WTC11 (cell line): ENCODE measurements at regions of chr1 and their contacts with region 1.

Region 1: DNA sequence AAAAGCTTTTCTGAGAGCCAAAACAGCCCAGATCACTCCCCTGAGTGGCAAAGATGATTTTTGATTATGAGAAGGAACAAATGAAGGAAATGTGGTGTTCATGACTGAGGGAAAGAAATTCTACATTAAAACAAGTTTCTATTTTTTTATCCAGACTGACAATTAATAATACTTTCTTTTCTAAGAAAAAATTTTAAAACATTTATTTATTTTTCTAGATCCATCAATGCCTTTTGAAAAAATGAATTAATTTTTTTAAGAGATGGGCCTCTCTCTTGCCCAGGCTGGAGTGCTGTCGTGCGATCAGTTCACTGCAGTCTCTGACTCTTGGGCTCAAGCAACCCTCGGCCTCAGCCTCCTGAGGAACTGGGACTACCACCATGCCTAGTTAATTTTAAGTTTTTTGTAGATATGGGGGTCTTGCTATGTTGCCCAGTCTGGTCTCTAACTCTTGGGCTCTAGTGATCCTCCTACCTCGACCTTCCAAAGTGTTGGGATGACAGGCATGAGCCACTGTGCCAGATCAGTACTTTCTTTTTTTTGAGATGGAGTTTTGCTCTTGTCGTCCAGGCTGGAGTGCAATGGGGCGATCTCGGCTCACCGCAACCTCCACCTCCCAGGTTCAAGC is 11.2 kb upstream of the TXNIP start:
- DNase-seq: no peak
- ATAC-seq: no peak
- H3K4me3 Mint-ChIP-seq: no peak overlapping the region
- H3K27ac Mint-ChIP-seq: no peak overlapping the region
- H3K4me1 Mint-ChIP-seq: no peaks in the 10 kb centered on the region
- H3K27me3 Mint-ChIP-seq: no peaks in the 10 kb centered on the region
- CTCF ChIP-seq: no peak; the same call in 1 of the 2 replicates

Region 2: DNA sequence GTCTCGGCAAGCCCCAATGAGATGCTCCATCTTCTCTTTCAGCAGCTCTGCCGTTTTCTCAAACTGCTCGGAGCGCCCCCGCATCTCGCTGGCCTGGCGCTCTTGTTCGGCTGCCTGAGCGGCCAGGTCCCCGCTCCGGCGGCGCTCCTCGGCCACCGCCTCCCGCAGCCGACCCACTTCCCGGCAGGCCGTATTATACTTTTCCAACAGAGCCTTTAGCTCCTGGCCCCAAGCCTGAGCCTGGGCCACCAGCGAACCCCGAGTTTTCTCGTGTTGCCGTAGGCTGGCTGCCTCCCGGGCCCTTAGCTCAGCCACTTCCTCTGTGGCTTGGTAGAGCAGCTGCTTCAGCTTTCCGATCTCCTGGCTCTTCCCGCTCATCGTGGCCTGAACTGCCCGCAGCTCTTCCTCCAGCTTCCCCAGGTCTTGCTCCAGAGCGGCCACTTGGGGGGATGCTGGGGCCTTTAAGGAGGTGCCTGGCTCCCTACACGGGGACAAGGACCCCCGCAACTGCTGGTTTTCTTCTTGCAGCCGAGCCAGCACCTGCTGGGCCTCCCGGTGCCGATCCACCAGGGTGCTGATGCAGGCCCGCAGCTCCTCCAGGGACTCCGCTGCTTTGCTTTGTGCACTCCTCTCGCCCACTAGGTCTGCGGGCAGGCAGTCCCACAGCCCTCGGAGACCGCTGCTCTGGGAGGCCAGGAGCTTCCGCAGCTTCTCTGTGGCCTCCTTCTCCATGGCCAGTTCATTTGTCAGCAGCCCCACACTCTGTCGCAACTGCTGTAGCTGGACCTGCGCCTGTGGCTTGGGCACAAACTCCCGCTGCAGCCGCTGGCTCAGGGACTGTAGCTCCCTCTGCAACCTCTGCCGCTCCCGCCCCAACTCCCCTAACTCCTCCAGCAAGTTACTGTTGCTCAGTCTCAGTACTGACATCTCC is 135.4 kb before region 1 on chr1:
- CTCF ChIA-PET with region 1: interaction called, 13 read pairs
- POLR2A ChIA-PET with region 1: no interaction called
- DNase-seq: peak; percentile 57
- ATAC-seq: peak; percentile 76
- H3K4me3 Mint-ChIP-seq: peak overlapping the region; percentile 69
- H3K27ac Mint-ChIP-seq: no peak overlapping the region; the same call in 1 of the 2 replicates
- H3K4me1 Mint-ChIP-seq: peaks cover 37% of the 10 kb centered on the region
- H3K27me3 Mint-ChIP-seq: peaks cover 39% of the 10 kb centered on the region
- CTCF ChIP-seq: no peak

Region 3: GRCh38 chr1:145957443-145958319 is 49.9 kb before region 1 on chr1 and contains the start of gene LIX1L:
- CTCF ChIA-PET with region 1: interaction called, 16 read pairs
- POLR2A ChIA-PET with region 1: no interaction called
- DNase-seq: peak; percentile 96
- ATAC-seq: peak; percentile 86
- H3K4me3 Mint-ChIP-seq: peak within 1 kb of the TSS; percentile 70
- H3K27ac Mint-ChIP-seq: peak within 1 kb of the TSS; percentile 14; the same call in 1 of the 2 replicates
- H3K4me1 Mint-ChIP-seq: peaks cover 31% of the 10 kb centered on the region
- H3K27me3 Mint-ChIP-seq: peaks cover 92% of the 10 kb centered on the region
- CTCF ChIP-seq: no peak
- total RNA-seq, gene LIX1L: 3.0 to 3.8 TPM (median 3.8 TPM) in 3 replicates

Region 4: GRCh38 chr1:145963995-145964901 is 43.4 kb before region 1 on chr1 and contains the starts of genes ANKRD34A and POLR3GL:
- CTCF ChIA-PET with region 1: interaction called, 10 read pairs
- POLR2A ChIA-PET with region 1: no interaction called
- DNase-seq: peak; percentile 96
- ATAC-seq: peak; percentile 85
- H3K4me3 Mint-ChIP-seq: peak within 1 kb of the TSS; percentile 91
- H3K27ac Mint-ChIP-seq: peak within 1 kb of the TSS; percentile 68; the same call in 1 of the 2 replicates
- H3K4me1 Mint-ChIP-seq: peaks cover 38% of the 10 kb centered on the region
- H3K27me3 Mint-ChIP-seq: peaks cover 70% of the 10 kb centered on the region
- CTCF ChIP-seq: no peak
- total RNA-seq, gene ANKRD34A: 0.21 to 0.44 TPM (median 0.22 TPM) in 3 replicates
- total RNA-seq, gene POLR3GL: 3.8 to 8.3 TPM (median 6.7 TPM) in 3 replicates

Region 5: DNA sequence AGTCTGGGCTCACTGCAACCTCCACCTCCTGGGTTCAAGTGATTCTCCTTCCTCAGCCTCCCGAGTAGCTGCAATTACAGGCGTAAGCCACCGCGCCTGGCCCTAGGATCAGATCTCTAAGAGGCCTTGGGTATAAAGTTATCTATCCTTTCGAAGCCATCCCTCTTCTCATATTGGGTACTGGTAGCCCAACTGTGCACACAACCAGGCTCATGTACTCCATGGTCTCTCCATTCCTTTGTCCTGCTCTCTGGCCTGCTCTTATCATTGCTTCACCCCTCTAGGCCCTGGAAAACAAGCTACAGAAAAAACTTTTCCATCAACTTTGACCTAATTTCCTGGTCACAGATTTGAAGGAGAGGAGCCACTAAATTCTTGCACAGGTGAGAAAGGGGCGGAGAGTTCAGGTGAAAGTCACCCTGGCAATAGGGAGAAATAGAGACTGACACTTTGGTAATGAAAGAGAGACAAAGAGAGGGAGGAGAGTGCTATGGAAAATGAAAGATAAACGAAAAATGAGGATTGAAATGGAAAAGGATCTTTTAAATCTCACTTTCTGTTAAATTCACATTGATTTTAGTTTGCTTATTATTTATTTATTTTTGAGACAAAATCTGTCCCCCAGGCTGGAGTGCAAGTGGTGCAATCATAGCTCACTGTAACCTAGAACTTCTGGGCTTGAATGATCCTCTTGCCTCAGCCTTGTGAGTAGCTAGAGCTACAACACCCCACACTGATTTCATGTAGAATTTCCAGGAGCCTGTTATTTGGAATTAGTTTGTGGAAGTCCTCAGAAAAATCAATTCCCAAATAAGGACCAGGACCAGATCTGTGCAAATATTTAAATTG is 17.1 kb before region 1 on chr1:
- CTCF ChIA-PET with region 1: interaction called, 28 read pairs
- POLR2A ChIA-PET with region 1: no interaction called
- DNase-seq: no peak
- ATAC-seq: no peak
- H3K4me3 Mint-ChIP-seq: no peak overlapping the region
- H3K27ac Mint-ChIP-seq: peak overlapping the region; percentile 83
- H3K4me1 Mint-ChIP-seq: peaks cover 55% of the 10 kb centered on the region
- H3K27me3 Mint-ChIP-seq: no peaks in the 10 kb centered on the region
- CTCF ChIP-seq: no peak

Region 6: GRCh38 chr1:146019231-146020057 is 11.8 kb after region 1 on chr1:
- CTCF ChIA-PET with region 1: interaction called, 34 read pairs
- POLR2A ChIA-PET with region 1: no interaction called
- DNase-seq: peak; percentile 72
- ATAC-seq: peak; percentile 95
- H3K4me3 Mint-ChIP-seq: peak overlapping the region; percentile 68
- H3K27ac Mint-ChIP-seq: no peak overlapping the region
- H3K4me1 Mint-ChIP-seq: peaks cover 15% of the 10 kb centered on the region
- H3K27me3 Mint-ChIP-seq: peaks cover 69% of the 10 kb centered on the region
- CTCF ChIP-seq: no peak